MCF 10A (cell line): ENCODE measurements at regions of chrX and their contacts with region 1.

Region 1: DNA sequence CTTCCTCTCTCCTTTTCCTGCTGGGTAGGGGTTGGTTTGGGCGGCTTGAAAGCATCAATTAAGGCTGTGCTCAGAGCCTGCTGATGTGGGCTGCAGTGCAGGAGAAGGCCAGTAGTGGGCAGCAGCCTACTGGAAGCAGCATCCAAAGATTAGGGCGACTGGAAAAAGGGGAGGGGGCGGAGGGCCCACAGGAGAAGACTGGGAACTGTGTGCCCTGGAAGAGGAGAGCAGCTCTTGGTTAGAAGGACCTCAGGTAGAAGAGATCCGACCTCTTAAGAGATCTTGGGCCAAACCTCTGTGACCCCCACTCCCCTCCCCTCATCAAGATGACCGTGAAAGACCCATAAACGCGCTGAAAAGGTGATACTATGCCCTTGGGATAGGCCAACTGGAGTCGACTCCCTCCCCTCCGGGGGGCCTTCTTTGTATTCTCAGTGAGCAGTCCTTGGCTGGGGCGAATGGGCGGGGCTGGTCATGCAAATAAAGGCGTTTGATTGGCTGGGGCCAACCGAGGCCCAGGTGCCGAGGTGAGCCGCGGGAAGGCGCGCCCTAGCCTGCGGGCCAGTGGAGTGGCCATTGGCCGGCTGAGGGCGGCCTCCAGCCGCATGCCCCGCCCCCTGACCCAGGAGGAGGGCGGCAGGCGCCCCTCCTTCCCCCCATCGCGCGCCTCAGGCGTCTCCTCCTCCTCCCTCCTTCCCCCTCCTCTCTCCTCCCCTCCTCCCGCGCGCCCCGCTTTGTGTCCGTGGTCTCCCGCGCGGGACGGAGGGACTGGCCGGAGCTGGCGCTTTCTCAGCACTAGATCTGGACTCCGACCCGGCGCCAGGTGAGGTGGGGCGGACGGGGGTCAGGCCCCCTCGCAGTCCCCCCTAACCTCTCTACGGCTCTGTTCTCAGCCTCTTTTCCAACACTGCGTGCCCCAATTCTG is 10.1 kb downstream of the DLG3 start:
- DNase-seq: peak; percentile 89
- H3K4me3 Mint-ChIP-seq: peak overlapping the region; percentile 83
- H3K27ac Mint-ChIP-seq: peak overlapping the region; percentile 49
- H3K4me1 Mint-ChIP-seq: peaks cover 9% of the 10 kb centered on the region
- H3K27me3 Mint-ChIP-seq: peaks cover 38% of the 10 kb centered on the region
- CTCF ChIP-seq: peak; percentile 81

Region 2: GRCh38 chrX:70346418-70347070 is 108.2 kb before region 1 on chrX:
- CTCF ChIA-PET with region 1: no interaction called
- POLR2A ChIA-PET with region 1: no interaction called
- intact Hi-C with region 1: no loop called
- DNase-seq: no peak
- H3K4me3 Mint-ChIP-seq: no peak overlapping the region
- H3K27ac Mint-ChIP-seq: no peak overlapping the region
- H3K4me1 Mint-ChIP-seq: no peaks in the 10 kb centered on the region
- H3K27me3 Mint-ChIP-seq: peaks cover 27% of the 10 kb centered on the region
- CTCF ChIP-seq: no peak

Region 3: DNA sequence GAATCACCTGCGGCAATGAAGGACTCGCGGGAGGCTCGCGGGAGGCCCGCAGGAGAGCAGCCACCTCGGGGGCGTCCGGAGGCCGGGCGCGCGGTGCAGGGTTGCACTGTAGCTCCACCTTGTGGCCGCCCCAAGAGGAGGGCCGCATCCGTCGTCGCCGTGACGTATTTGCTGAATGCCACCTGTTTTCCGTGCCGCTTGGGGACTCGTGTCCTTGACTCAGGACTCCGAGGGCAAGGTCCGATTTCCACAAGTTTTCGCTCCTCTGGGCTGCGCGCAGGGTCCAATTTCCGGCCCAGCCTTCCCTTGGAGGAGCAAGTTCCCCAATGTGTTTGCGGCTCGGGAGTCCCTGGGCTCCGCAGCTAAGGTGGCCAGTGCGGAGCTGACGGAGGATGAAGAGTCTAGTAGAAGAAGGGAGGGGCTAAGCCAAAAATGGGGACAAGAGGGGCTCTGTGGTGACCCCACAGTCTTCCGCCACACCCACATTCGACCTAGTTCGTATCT is 20.8 kb before region 1 on chrX:
- CTCF ChIA-PET with region 1: interaction called, 17 read pairs
- POLR2A ChIA-PET with region 1: interaction called, 8 read pairs
- intact Hi-C with region 1: no loop called
- DNase-seq: peak; percentile 55
- H3K4me3 Mint-ChIP-seq: peak overlapping the region; percentile 80
- H3K27ac Mint-ChIP-seq: peak overlapping the region; percentile 78
- H3K4me1 Mint-ChIP-seq: peaks cover 10% of the 10 kb centered on the region
- H3K27me3 Mint-ChIP-seq: peaks cover 61% of the 10 kb centered on the region
- CTCF ChIP-seq: peak; percentile 44

Region 4: DNA sequence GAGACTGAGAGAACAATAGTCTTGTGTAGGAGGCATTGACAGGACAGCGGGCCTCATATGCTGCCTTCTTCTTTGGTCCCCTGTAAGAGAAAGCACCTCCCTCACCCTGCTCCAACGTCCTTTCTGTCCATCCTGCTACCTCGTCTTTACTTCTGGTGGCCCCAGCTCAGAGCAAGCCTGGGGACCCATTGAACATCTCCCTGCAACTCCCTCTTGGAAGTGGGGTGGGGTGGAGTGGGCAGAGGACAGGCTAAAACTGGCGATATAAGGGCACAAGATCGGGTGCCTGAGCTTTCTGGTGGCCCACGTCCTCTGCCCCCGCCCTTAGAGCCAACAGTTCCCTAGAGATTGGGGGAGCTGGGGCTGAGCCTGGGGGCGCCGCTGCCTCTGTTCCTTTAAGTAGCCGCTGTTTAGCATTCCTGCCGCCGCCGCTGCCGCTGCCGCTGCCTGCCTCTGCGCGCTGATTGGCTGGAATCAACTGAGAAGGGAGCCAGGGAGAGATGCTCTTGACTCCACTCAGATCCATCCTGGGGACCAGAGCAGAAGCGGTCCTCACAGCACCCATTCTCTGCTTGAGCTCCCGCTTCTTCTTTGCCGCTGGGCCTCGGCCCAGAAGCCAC is 10.3 kb before region 1 on chrX and contains the start of gene DLG3:
- CTCF ChIA-PET with region 1: interaction called, 10 read pairs
- POLR2A ChIA-PET with region 1: interaction called, 3 read pairs
- intact Hi-C with region 1: no loop called
- DNase-seq: peak; percentile 23
- H3K4me3 Mint-ChIP-seq: no peak within 1 kb of the TSS
- H3K27ac Mint-ChIP-seq: no peak within 1 kb of the TSS
- H3K4me1 Mint-ChIP-seq: no peaks in the 10 kb centered on the region
- H3K27me3 Mint-ChIP-seq: peaks cover 52% of the 10 kb centered on the region
- CTCF ChIP-seq: no peak
- total RNA-seq, gene DLG3: 12.8 and 20.1 TPM in 2 replicates

Region 5: GRCh38 chrX:70476934-70477733 is 22.4 kb after region 1 on chrX:
- CTCF ChIA-PET with region 1: interaction called, 4 read pairs
- POLR2A ChIA-PET with region 1: interaction called, 18 read pairs
- intact Hi-C with region 1: no loop called
- DNase-seq: peak; percentile 75
- H3K4me3 Mint-ChIP-seq: peak overlapping the region; percentile 62
- H3K27ac Mint-ChIP-seq: peak overlapping the region; percentile 76
- H3K4me1 Mint-ChIP-seq: peaks cover 33% of the 10 kb centered on the region
- H3K27me3 Mint-ChIP-seq: peaks cover 59% of the 10 kb centered on the region
- CTCF ChIP-seq: no peak

Region 6: DNA sequence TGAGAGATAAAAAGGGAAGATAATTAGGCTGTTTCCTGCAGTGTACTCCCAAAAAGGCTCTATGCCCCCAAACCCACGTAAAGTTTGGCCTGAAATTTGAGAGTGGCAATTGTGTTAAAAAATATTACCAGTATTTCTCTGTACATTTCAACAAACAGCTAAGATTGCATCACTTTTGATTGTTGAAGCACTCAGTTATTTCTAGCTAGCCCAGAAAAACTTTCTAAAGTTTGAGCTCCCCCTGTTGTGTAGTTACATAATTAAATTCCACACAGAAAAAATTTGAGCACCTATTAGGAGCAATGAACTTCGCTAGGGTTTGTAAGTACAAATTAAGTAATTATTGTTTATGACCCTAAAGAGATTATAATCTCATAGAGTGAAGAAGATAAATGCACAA is 99.4 kb after region 1 on chrX:
- CTCF ChIA-PET with region 1: interaction called, 9 read pairs
- POLR2A ChIA-PET with region 1: no interaction called
- intact Hi-C with region 1: loop called (anchors 1 kb)
- DNase-seq: peak; percentile 42
- H3K4me3 Mint-ChIP-seq: no peak overlapping the region
- H3K27ac Mint-ChIP-seq: no peak overlapping the region
- H3K4me1 Mint-ChIP-seq: peaks cover 6% of the 10 kb centered on the region
- H3K27me3 Mint-ChIP-seq: peaks cover 42% of the 10 kb centered on the region
- CTCF ChIP-seq: no peak

Region 7: DNA sequence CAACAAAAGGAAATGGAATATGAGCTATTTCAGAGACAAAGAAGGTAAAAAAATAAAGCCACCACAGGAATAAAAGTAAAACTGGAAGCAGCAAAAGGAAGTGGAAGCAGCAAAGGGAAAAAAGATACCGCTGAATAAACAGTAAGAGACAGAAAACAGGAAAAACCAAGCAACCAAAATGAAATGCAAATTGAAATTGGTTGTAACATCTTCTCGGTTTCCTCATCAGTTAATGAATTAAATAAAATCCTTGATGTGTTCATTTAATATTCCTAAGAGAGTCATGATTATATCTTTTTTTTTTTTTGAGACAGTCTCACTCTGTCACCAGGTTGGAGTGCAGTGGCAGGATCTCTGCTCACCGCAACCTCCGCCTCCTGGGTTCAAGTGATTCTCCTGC is 122.7 kb after region 1 on chrX:
- CTCF ChIA-PET with region 1: no interaction called
- POLR2A ChIA-PET with region 1: no interaction called
- intact Hi-C with region 1: no loop called
- DNase-seq: no peak
- H3K4me3 Mint-ChIP-seq: no peak overlapping the region
- H3K27ac Mint-ChIP-seq: no peak overlapping the region
- H3K4me1 Mint-ChIP-seq: no peaks in the 10 kb centered on the region
- H3K27me3 Mint-ChIP-seq: no peaks in the 10 kb centered on the region
- CTCF ChIP-seq: no peak

Region 8: GRCh38 chrX:70664726-70665125 is 210.0 kb after region 1 on chrX:
- CTCF ChIA-PET with region 1: interaction called, 18 read pairs
- POLR2A ChIA-PET with region 1: interaction called, 3 read pairs
- intact Hi-C with region 1: no loop called
- DNase-seq: peak; percentile 50
- H3K4me3 Mint-ChIP-seq: no peak overlapping the region
- H3K27ac Mint-ChIP-seq: no peak overlapping the region
- H3K4me1 Mint-ChIP-seq: no peaks in the 10 kb centered on the region
- H3K27me3 Mint-ChIP-seq: peaks cover 74% of the 10 kb centered on the region
- CTCF ChIP-seq: peak; percentile 50

Region 9: DNA sequence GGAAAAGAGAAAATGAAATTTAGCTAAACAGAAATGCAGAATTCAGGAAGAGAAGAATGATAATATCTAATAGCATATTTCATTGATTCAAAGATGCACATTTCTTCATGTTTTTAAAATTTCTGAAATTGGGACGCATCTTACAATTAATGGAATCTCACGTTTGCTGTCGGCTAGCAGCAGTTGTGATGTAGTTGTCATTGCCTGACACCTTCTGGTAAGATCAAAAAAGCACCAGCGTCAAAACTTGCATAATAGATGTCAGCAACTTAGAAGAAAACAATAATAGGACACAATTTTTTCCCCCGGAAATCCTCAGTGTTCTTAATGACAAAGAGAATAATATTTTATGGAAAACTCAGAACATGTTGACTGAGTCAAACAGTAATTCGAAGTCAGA is 506.0 kb after region 1 on chrX:
- CTCF ChIA-PET with region 1: interaction called, 3 read pairs
- POLR2A ChIA-PET with region 1: no interaction called
- intact Hi-C with region 1: loop called (anchors 2 kb)
- DNase-seq: peak; percentile 33
- H3K4me3 Mint-ChIP-seq: no peak overlapping the region
- H3K27ac Mint-ChIP-seq: no peak overlapping the region
- H3K4me1 Mint-ChIP-seq: no peaks in the 10 kb centered on the region
- H3K27me3 Mint-ChIP-seq: peaks cover 42% of the 10 kb centered on the region
- CTCF ChIP-seq: peak; percentile 24